Cardiac septum (tissue), 1 donor: ENCODE measurements at regions of chr15 and their contacts with region 1.

Region 1: DNA sequence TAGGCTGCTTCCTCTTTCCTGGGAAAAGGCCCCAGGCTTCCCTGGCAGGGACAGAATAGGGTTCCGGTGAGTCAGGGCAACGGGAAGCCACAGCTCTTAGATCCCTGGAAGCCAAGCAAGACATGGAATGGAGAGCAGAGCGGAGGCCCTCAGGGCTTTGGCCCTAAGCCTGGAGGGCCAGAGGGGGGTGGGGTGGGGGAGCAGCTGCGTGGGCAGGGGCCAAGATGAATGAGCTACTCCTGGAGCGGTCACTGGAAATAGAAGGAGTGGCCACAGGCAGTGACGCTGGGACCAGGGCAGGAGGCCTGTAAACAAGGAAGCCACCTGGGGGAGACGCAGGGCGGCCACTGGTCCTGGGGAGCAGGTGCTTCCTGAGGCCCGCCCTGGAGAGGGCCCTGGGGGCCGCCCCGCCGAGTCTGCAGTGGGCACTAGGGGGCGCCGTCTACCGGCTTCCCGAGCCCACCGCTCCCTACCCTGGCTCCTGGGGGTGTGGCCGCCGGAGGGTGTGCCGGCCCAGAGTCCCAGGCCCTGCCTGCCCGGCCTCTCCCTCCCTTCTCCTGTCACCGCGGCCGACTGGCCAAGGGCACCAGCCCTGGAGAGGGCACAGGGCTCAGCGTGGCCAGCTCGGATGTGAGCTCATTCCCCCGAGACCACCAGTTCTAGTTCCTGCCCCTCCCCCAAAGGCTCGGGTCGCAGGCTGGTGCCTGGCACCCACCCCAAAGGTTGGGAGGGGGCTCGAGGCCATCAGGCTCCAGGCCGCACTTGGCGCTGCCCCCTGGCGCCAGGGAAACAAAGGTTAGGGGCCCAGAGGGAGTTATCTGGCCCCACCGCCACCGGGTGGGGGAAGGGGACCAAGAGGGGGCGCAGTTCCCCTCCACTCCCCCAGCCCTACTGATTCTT is 12.1 kb downstream of the VPS18 start:
- DNase-seq: peak; percentile 94

Region 2: GRCh38 chr15:40928821-40929659 is 22.7 kb after region 1 on chr15 and contains the start of gene DLL4:
- intact Hi-C with region 1: loop called (anchors 2 kb)
- DNase-seq: peak; percentile 84
- total RNA-seq, gene DLL4: 11.5 TPM

Region 3: DNA sequence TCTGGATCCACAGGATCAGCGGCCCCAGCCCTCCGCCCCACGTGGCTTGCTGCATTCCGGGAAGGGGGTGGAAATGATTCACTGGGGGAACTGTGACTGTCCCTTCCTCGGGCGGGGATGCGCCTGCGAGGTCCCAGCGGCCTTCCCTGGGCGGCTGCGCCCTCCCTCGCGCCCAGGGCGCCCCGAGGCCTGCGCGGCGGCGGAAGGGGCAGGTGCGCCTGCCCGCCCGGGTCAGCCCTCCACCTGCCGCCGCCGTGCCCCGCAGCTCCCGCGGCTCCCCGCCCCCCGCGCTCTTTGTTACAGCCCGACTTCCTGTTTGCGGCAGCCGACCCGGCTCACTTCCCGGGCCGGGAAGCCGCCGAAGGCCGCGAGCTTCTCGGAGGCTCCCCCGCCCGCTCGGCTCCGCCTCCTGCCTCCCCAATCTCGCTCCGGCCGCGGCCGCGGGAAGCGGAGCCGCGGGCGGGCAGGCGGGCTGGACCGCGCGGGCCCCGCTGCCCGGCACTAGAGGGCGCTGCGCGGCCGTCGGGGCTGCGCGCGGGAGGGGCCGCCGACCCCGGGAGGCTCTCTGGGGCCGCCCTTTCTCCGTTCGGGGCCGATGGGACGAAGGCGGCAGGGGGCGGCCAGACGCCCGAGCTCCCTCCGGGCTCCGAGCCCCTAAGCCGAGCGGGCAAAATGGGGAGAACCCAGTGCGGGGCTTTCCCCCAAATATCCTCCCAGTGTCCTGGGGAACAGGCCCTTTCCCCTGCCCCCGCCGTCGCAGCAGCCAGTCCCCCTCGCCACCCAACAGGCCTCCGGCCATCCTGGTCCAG is 35.4 kb after region 1 on chr15:
- intact Hi-C with region 1: loop called (anchors 1 kb)
- DNase-seq: peak; percentile 91

Region 4: GRCh38 chr15:40957581-40958051 is 51.3 kb after region 1 on chr15:
- intact Hi-C with region 1: loop called (anchors 5 kb)
- DNase-seq: peak; percentile 85

Region 5: GRCh38 chr15:41011055-41011815 is 104.9 kb after region 1 on chr15:
- intact Hi-C with region 1: no loop called
- DNase-seq: no peak

Region 6: GRCh38 chr15:41022487-41023090 is 116.2 kb after region 1 on chr15:
- intact Hi-C with region 1: loop called (anchors 1 kb)
- DNase-seq: no peak

Region 7: GRCh38 chr15:41116116-41116871 is 210.0 kb after region 1 on chr15 and contains the start of gene INO80:
- intact Hi-C with region 1: loop called (anchors 5 kb)
- DNase-seq: peak; percentile 99
- total RNA-seq, gene INO80: 13.3 TPM

Region 8: DNA sequence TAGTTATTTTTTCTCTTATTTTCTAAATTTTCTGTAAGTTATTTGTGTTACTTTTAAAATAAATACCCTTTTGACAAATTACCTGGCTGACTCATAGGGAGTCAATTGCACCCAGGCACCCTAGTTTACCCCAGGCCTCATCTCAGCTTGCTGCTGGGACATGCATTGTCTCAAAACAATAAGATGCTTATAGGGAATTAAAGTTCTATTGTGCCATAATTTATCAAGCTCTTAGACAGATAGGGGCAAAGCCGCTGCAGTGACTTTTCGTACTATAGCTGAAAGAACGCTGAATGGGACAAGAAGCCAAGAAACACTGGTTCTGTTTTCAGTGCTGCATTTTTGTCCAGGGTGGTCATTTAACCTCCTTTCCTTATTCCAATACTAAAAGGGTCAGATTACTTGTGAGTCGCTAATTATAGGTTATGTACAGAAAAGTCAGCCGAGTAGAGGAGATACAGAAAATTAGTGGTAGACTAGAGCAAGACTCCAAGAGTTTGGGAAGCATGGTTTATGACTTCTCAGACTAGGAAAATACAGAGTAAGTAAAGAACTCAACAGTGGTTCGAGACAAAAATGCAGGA is 274.0 kb after region 1 on chr15:
- intact Hi-C with region 1: loop called (anchors 5 kb)
- DNase-seq: no peak